ENCODE measurements at regions of chr2 and their contacts with region 1.

Region 1: GRCh38 chr2:165203689-165204559 is at the start of gene SCN3A:
- DNase-seq: peak; percentile 37
- H3K4me3 ChIP-seq: no peak within 1 kb of the TSS
- H3K27ac ChIP-seq: no peak within 1 kb of the TSS
- H3K4me1 ChIP-seq: peaks cover 2% of the 10 kb centered on the region
- H3K27me3 ChIP-seq: no peaks in the 10 kb centered on the region
- CTCF ChIP-seq: peak; percentile 73 to 80
- total RNA-seq, gene SCN3A: not detected

Region 2: DNA sequence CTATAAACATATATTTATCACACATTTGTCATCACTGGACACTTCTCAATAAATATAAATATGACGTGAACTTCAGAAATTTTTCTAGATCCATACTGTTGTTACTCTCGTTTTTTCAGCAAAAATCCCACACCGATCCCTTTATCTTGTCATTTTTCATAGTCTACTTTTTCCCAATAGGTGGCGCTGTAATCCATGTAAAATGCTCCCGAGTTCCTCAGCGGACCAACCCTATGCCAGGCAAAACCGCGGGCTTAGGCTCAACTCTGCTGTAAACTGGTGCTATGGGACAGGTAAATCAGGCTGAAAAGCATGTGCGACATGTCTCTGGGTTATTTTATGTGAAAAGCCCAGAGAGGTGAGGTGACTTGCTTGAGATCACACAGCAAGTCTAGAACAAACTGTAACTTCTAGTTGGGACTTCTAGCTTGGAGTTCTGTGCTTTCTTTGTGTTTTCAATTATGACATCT is 466.3 kb before region 1 on chr2:
- CTCF ChIA-PET with region 1: no interaction called
- dilution Hi-C with region 1: no loop called
- in situ Hi-C with region 1: no loop called
- intact Hi-C with region 1: loop called (anchors 5 kb)
- DNase-seq: peak; percentile 65
- H3K4me3 ChIP-seq: no peak overlapping the region
- H3K27ac ChIP-seq: peak overlapping the region; percentile 24
- H3K4me1 ChIP-seq: peaks cover 34% of the 10 kb centered on the region
- H3K27me3 ChIP-seq: no peaks in the 10 kb centered on the region
- CTCF ChIP-seq: peak; percentile 68 to 69

Region 3: DNA sequence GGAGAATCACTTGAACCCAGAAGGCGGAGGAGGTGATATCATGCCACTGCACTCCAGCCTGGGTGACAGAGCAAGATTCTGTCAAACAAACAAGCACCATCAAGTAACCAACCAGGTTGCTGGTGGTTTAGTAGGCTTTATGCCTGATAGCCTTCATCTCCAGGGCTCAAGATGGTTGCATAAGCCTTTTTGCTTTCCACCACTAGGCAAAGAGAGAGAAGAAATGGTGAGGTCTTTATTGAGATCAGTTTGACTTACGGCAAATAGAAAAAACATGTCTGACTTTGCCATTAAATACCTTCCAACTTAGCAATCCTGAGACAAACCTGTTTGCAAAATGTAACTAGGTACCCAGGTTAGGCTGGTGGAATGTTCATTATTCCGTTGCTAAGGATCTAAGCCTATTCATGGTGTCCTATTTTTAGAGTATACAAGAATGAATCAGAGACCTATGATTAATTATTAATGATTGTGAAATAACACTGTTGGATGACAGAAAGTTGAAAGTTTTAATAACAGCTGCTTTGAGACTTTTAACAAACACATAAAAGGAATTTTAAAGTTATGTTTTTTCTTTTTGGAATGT is 195.1 kb before region 1 on chr2:
- CTCF ChIA-PET with region 1: no interaction called
- dilution Hi-C with region 1: no loop called
- in situ Hi-C with region 1: loop called (anchors 10 kb)
- intact Hi-C with region 1: no loop called
- DNase-seq: peak; percentile 98
- H3K4me3 ChIP-seq: peak overlapping the region in 2 of 3 experiments; percentile 7 to 12
- H3K27ac ChIP-seq: peak overlapping the region; percentile 96
- H3K4me1 ChIP-seq: peaks cover 40% of the 10 kb centered on the region
- H3K27me3 ChIP-seq: no peaks in the 10 kb centered on the region
- CTCF ChIP-seq: no peak

Region 4: DNA sequence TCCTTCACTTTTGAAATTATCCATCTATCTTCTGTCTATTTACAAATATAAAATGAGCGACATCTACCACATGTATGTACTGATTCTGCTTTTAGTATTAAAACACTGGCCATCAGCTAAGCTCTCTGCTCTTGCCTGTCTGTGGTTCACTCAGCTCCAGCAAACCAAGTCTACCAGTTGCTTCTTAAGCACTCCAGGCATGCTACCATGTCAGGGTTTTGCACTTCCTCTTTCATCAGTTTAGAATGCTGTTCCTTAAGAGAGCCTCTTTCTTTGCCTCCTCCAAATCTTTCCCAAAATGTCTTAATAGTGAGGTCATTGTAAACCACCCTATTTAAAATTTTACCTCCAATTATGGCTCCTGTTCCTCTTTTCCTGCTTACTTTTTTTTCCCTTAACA is 59.6 kb before region 1 on chr2:
- CTCF ChIA-PET with region 1: no interaction called
- dilution Hi-C with region 1: no loop called
- in situ Hi-C with region 1: no loop called
- intact Hi-C with region 1: loop called (anchors 2 kb)
- DNase-seq: no peak
- H3K4me3 ChIP-seq: no peak overlapping the region
- H3K27ac ChIP-seq: no peak overlapping the region
- H3K4me1 ChIP-seq: no peaks in the 10 kb centered on the region
- H3K27me3 ChIP-seq: no peaks in the 10 kb centered on the region
- CTCF ChIP-seq: no peak

Region 5: GRCh38 chr2:165376571-165376975 is 172.6 kb after region 1 on chr2:
- CTCF ChIA-PET with region 1: no interaction called
- dilution Hi-C with region 1: no loop called
- in situ Hi-C with region 1: no loop called
- intact Hi-C with region 1: no loop called
- DNase-seq: no peak
- H3K4me3 ChIP-seq: no peak overlapping the region
- H3K27ac ChIP-seq: no peak overlapping the region
- H3K4me1 ChIP-seq: no peaks in the 10 kb centered on the region
- H3K27me3 ChIP-seq: no peaks in the 10 kb centered on the region
- CTCF ChIP-seq: no peak

Region 6: DNA sequence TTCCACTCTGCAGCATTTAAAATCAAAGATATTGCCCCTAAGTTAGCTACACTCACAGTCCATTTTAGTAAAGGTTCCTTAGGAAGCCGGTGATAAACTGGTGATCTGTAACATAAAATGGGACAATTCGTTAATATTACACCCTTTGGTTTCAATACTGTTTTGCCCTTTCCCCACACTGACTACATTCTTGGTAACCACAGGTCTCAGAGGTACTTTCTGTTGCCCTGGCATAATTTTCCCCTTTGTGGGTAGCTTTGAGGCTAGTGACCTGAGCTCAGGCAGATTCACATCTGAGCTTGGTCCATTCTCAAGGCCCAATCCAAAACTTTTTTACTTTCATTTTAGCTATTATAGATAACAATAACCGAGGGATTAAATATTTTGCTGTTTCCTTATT is 232.6 kb after region 1 on chr2:
- CTCF ChIA-PET with region 1: no interaction called
- dilution Hi-C with region 1: no loop called
- in situ Hi-C with region 1: no loop called
- intact Hi-C with region 1: no loop called
- DNase-seq: no peak
- H3K4me3 ChIP-seq: no peak overlapping the region
- H3K27ac ChIP-seq: no peak overlapping the region
- H3K4me1 ChIP-seq: no peaks in the 10 kb centered on the region
- H3K27me3 ChIP-seq: peaks cover 2% of the 10 kb centered on the region
- CTCF ChIP-seq: no peak

Region 7: GRCh38 chr2:165889158-165889557 is 685.2 kb after region 1 on chr2:
- CTCF ChIA-PET with region 1: no interaction called
- dilution Hi-C with region 1: no loop called
- in situ Hi-C with region 1: no loop called
- intact Hi-C with region 1: no loop called
- DNase-seq: no peak
- H3K4me3 ChIP-seq: no peak overlapping the region
- H3K27ac ChIP-seq: no peak overlapping the region
- H3K4me1 ChIP-seq: peaks cover 5% of the 10 kb centered on the region
- H3K27me3 ChIP-seq: no peaks in the 10 kb centered on the region
- CTCF ChIP-seq: no peak

Measured in mammary epithelial cell (primary cell).